CD8-positive, alpha-beta T cell (primary cell): ENCODE measurements at regions of chr7 and their contacts with region 1.

Region 1: GRCh38 chr7:157432957-157433576 is 96.3 kb downstream of the DNAJB6 start:
- DNase-seq: peak; percentile 24 to 83 (median 60)
- ATAC-seq: peak; percentile 87
- H3K4me3 ChIP-seq: peak overlapping the region; percentile 14 to 25
- H3K4me3 Mint-ChIP-seq: peak overlapping the region; percentile 55
- H3K27ac ChIP-seq: no peak overlapping the region
- H3K27ac Mint-ChIP-seq: no peak overlapping the region
- H3K4me1 ChIP-seq: peaks cover 11% of the 10 kb centered on the region
- H3K4me1 Mint-ChIP-seq: peaks cover 13% of the 10 kb centered on the region
- H3K27me3 ChIP-seq: no peaks in the 10 kb centered on the region
- H3K27me3 Mint-ChIP-seq: no peaks in the 10 kb centered on the region
- CTCF ChIP-seq: peak; percentile 67

Region 2: DNA sequence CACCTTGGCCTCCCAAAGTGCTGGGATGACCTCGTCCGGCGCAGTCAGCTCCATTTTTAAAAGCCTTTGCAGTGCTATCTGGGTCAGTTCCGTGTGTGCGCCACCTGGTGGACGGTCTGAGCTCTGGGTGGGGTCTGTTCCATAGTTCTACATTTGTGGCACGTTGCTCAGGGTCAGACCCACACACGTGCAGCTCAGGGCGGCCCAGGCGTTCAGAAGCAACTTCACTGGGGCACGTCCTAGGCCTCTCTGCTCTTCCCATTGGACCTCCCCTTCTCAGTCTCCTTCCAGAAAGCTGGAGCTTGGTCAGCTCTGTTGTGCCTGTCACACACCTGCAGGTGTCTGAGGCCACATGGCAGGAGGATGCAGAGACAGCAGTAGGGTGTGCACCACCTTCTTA is 41.6 kb after region 1 on chr7:
- CTCF ChIA-PET with region 1: interaction called, 5 read pairs
- POLR2A ChIA-PET with region 1: interaction called, 6 read pairs
- intact Hi-C with region 1: loop called in 1 of 2 experiments (anchors 2 kb)
- DNase-seq: peak in 4 of 9 experiments; percentile 31 to 57 (median 44)
- ATAC-seq: no peak
- H3K4me3 ChIP-seq: no peak overlapping the region
- H3K4me3 Mint-ChIP-seq: no peak overlapping the region
- H3K27ac ChIP-seq: no peak overlapping the region
- H3K27ac Mint-ChIP-seq: no peak overlapping the region
- H3K4me1 ChIP-seq: peaks cover 40% of the 10 kb centered on the region
- H3K4me1 Mint-ChIP-seq: peaks cover 54% of the 10 kb centered on the region
- H3K27me3 ChIP-seq: no peaks in the 10 kb centered on the region
- H3K27me3 Mint-ChIP-seq: no peaks in the 10 kb centered on the region
- CTCF ChIP-seq: no peak

Region 3: DNA sequence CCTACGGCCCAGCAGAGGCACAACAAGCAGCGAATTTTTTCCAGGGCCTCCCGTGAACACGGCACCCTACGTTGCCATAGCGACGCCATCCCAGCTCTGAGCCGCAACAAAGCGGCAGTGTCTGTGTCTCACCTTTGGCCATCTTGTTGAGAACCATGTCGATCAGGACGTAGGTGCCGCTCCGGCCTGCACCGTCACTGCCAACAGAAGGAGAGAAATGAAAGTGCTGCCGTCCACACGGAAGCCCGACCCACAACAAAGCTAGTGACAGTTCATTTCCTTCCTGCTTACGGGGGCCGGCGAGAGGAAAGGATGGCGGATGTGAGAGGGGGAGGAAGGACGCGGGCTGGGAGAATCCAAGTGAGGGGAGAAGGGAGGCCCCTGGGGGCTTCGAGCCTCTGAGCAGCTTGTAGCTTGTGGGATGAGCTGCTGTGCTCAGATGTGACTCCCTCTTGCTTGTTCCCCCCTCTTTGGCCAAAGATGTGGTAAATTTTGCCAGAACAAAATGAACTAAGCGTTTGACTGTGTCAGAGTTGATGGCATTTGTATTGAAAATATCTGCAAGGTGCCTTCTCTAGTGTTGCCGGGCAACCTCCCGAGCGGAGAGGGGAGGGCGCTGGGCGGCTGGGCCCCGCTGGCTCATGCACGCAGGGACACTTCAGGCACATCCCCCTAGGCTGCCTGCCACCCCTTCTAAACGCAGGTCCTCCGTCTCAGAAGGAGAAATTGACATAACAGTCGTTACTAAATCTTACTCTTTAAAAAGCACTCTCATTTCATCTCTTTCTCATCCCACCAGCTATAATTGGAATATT is 135.9 kb after region 1 on chr7:
- CTCF ChIA-PET with region 1: no interaction called
- POLR2A ChIA-PET with region 1: no interaction called
- intact Hi-C with region 1: loop called in 1 of 2 experiments (anchors 10 kb)
- DNase-seq: peak; percentile 26 to 83 (median 62)
- ATAC-seq: peak; percentile 80
- H3K4me3 ChIP-seq: peak overlapping the region; percentile 40 to 52
- H3K4me3 Mint-ChIP-seq: peak overlapping the region; percentile 89
- H3K27ac ChIP-seq: peak overlapping the region in 1 of 2 experiments; percentile 20
- H3K27ac Mint-ChIP-seq: peak overlapping the region; percentile 79
- H3K4me1 ChIP-seq: peaks cover 16% of the 10 kb centered on the region
- H3K4me1 Mint-ChIP-seq: peaks cover 22% of the 10 kb centered on the region
- H3K27me3 ChIP-seq: peaks cover 0 to 6% of the 10 kb centered on the region in 2 experiments
- H3K27me3 Mint-ChIP-seq: peaks cover 2% of the 10 kb centered on the region
- CTCF ChIP-seq: no peak

Region 4: GRCh38 chr7:157625973-157626742 is 193.1 kb after region 1 on chr7:
- CTCF ChIA-PET with region 1: interaction called, 8 read pairs
- POLR2A ChIA-PET with region 1: no interaction called
- intact Hi-C with region 1: loop called in 1 of 2 experiments (anchors 5 kb)
- DNase-seq: peak in 3 of 9 experiments; percentile 27 to 77 (median 49)
- ATAC-seq: peak; percentile 63
- H3K4me3 ChIP-seq: peak overlapping the region in 1 of 2 experiments; percentile 6
- H3K4me3 Mint-ChIP-seq: peak overlapping the region; percentile 73
- H3K27ac ChIP-seq: no peak overlapping the region
- H3K27ac Mint-ChIP-seq: peak overlapping the region; percentile 83
- H3K4me1 ChIP-seq: peaks cover 66% of the 10 kb centered on the region
- H3K4me1 Mint-ChIP-seq: peaks cover 70% of the 10 kb centered on the region
- H3K27me3 ChIP-seq: no peaks in the 10 kb centered on the region
- H3K27me3 Mint-ChIP-seq: peaks cover 10% of the 10 kb centered on the region
- CTCF ChIP-seq: no peak

Region 5: DNA sequence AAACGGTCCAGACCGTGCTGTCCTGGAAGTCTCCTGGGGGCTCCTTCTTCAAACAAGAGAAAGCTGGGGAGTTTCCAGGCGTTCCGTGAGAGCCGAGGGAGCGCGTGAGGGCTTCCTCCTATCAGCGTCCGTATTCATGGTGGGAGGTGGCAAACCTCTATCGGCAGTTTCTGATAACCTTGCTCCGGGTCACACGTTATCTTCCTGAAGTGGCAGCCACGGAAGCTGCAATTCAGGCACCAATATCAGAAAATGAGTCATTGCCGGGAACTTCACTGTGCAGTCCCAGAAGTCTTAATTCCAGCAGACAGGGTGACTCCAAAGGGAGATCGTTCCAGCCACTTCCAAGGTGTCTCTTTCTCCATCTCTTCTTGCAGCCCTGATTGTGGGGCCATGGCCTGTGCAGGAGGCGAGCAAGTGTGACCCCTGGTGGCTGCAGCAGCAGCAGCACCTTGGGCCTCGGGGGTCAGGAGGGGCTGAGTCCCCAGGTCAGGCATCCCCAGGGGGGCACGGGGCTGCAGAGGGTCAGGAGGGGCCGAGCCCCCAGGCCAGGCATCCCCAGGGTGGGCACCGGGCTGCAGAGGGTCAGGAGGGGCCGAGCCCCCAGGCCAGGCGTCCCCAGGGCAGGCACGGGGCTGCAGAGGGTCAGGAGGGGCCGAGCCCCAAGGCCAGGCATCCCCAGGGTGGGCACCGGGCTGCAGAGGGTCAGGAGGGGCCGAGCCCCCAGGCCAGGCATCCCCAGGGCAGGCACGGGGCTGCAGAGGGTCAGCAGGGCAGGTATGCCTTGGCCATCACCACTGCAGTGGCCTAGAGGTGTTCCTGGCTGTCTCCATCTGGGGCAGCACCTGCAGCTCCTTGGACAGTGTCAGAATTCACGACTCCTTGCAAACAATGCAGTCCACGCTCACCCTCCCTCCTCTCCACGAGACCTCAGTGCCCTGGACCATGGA is 442.4 kb after region 1 on chr7:
- CTCF ChIA-PET with region 1: interaction called, 6 read pairs
- POLR2A ChIA-PET with region 1: no interaction called
- intact Hi-C with region 1: loop called (anchors 1 kb)
- DNase-seq: peak in 8 of 9 experiments; percentile 29 to 72 (median 55)
- ATAC-seq: peak; percentile 78
- H3K4me3 ChIP-seq: peak overlapping the region; percentile 15 to 16
- H3K4me3 Mint-ChIP-seq: peak overlapping the region; percentile 84
- H3K27ac ChIP-seq: no peak overlapping the region
- H3K27ac Mint-ChIP-seq: peak overlapping the region; percentile 53
- H3K4me1 ChIP-seq: peaks cover 38% of the 10 kb centered on the region
- H3K4me1 Mint-ChIP-seq: peaks cover 35% of the 10 kb centered on the region
- H3K27me3 ChIP-seq: no peaks in the 10 kb centered on the region
- H3K27me3 Mint-ChIP-seq: no peaks in the 10 kb centered on the region
- CTCF ChIP-seq: peak; percentile 69